ENCODE measurements at regions of chr1 and their contacts with region 1.

Region 1: GRCh38 chr1:171984850-171985485 is 143.7 kb downstream of the DNM3 start:
- DNase-seq: no peak
- H3K4me3 ChIP-seq: no peak overlapping the region
- H3K27ac ChIP-seq: no peak overlapping the region
- H3K27me3 ChIP-seq: no peaks in the 10 kb centered on the region
- CTCF ChIP-seq: peak; percentile 89

Region 2: DNA sequence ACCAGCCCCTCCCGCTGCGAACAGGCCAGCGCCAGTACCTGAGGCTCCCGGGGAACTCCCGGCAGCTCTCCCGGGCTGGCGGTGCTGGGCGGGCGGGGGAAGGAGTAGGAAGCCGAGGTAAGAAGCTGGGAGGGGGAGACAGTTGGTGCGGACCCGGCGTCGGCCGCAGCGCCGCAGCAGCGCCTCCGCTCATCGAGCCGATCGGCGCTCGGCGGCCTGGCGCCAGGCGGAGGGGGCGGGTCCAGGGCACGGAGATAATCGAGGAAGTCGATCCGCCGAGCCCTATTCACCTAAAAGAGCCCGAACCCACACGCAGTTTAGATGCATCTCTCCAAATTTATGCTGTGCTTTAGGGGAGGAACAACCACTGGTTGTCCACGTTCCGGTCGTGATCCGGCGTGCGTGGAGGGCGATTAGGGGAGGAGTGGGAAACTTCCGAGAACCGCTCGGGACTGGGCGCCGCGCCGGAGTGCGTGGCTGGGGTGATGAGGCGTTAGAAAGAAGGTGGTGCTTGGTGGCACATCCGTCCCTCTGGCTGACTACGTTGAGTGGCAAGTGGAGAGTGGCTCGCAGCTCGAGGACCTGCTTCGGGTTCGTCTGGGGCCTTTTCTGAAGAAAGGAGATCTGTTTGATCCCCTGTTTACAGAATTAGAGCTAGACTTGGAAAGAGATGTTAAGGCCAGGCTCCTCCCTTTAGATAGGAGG is 242.9 kb before region 1 on chr1 and contains the start of gene VAMP4:
- CTCF ChIA-PET with region 1: interaction called, 12 read pairs
- POLR2A ChIA-PET with region 1: interaction called, 4 read pairs
- DNase-seq: no peak
- H3K4me3 ChIP-seq: peak within 1 kb of the TSS; percentile 90
- H3K27ac ChIP-seq: peak within 1 kb of the TSS; percentile 95
- H3K27me3 ChIP-seq: no peaks in the 10 kb centered on the region
- CTCF ChIP-seq: no peak
- polyA plus RNA-seq, gene VAMP4: 13.0 and 20.8 TPM in 2 replicates

Region 3: DNA sequence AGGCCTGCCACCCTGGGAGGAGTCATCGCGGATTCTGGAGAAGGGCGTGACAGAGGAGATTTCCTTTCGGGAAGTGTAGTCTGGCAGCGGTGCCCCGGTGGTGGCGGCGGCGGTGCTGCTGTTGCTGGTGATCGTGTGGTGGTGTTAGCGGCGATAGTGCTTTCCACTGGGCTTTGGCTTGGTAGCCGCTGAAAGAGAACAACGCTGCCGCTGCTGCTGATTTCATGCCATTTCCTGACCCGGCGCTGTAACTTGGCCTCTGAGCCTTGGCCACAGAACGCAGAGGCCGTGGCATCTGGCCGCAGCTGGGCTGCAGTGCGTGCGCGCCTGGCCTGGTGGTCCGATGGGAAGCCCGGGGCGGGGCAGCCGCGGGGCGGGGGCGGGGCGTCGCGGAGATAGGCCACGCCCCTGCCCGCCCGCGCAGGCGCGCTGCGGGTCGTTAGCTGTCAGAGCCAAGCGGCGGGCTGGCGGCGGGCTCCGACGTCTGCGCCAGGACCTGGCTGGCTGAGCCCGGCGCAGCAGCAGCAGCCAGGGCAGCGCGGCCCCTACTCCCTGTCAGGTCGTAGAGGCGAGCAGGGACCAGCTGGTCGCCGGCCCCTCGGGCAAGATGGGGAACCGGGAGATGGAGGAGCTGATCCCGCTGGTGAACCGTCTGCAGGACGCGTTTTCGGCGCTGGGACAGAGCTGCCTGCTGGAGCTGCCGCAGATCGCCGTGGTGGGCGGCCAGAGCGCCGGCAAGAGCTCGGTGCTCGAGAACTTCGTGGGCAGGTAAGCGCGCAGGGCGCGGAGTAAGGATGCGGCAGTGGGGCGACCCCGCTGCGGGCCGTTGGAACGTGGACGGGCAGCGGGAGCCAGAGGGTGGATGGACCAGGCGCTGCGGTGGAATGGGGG is 143.7 kb before region 1 on chr1 and contains the start of gene DNM3:
- CTCF ChIA-PET with region 1: interaction called, 10 read pairs
- POLR2A ChIA-PET with region 1: no interaction called
- DNase-seq: peak; percentile 60
- H3K4me3 ChIP-seq: peak within 1 kb of the TSS; percentile 67
- H3K27ac ChIP-seq: no peak within 1 kb of the TSS
- H3K27me3 ChIP-seq: peaks cover 10% of the 10 kb centered on the region
- CTCF ChIP-seq: no peak
- polyA plus RNA-seq, gene DNM3: 0.37 and 0.46 TPM in 2 replicates

Region 4: GRCh38 chr1:171898941-171899340 is 86.0 kb before region 1 on chr1:
- CTCF ChIA-PET with region 1: no interaction called
- POLR2A ChIA-PET with region 1: no interaction called
- DNase-seq: no peak
- H3K4me3 ChIP-seq: no peak overlapping the region
- H3K27ac ChIP-seq: no peak overlapping the region
- H3K27me3 ChIP-seq: no peaks in the 10 kb centered on the region
- CTCF ChIP-seq: no peak

Region 5: DNA sequence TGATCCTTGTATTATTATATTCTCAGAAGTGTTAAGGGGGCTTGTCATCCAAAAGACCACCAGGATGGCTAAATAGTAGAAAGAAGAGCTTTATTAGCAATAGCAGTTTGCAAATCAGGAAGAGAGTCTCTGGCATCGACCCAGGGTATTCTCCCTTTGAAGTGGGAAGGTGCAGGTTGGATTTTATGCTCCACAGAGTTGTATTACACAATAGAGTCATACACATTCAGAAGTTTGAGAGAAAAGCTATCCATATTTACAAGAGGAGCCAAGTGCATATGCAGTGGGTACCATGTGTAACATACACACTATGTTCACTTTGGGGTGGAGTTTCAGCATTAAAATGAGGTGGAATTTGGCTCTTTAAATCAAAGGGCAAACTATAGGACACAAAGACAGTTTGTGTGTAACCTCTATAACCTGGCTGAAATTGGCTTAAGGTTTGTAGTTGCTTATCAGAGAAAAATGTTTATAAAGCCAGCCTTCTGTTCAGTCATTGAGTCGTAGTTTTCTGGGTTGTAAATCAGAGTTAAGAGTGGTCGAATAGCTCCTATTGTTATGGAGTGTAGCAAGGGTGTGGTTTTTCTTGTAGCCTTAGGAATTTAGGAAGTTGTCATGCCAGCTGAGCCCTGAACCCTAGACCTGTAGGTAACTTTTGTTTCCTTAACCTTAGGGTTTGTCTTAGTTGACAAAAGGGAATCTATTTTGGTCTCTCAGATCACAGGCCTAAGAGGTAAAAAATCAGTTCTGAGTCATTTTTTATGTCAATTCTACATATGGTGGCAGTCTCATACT is 18.3 kb before region 1 on chr1:
- CTCF ChIA-PET with region 1: interaction called, 31 read pairs
- POLR2A ChIA-PET with region 1: no interaction called
- DNase-seq: no peak
- H3K4me3 ChIP-seq: no peak overlapping the region
- H3K27ac ChIP-seq: no peak overlapping the region
- H3K27me3 ChIP-seq: no peaks in the 10 kb centered on the region
- CTCF ChIP-seq: no peak

Region 6: DNA sequence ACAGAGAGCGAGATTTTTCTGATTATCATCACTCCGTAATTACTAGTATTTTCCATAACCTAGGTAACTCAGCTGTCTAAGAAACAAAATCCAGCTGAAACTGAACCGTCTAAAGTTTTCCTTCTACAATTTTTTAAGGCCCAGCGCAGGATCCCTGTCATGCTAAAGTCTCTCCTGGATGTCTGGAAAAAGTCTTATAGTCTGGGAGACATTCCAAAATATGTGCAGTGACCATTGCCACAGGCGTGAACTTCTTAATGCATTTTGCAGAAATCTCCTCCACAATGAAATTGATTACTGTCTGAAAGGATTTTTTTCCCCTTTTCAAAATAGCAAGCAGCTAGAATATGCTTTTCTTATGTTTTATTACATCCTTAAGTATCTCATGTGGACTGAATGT is 226.3 kb after region 1 on chr1:
- CTCF ChIA-PET with region 1: no interaction called
- POLR2A ChIA-PET with region 1: interaction called, 15 read pairs
- DNase-seq: no peak
- H3K4me3 ChIP-seq: no peak overlapping the region
- H3K27ac ChIP-seq: no peak overlapping the region
- H3K27me3 ChIP-seq: no peaks in the 10 kb centered on the region
- CTCF ChIP-seq: no peak

Measured in AG04450 (cell line).